Left ventricle myocardium superior (tissue), 1 donor: ENCODE measurements at regions of chr5 and their contacts with region 1.

Region 1: DNA sequence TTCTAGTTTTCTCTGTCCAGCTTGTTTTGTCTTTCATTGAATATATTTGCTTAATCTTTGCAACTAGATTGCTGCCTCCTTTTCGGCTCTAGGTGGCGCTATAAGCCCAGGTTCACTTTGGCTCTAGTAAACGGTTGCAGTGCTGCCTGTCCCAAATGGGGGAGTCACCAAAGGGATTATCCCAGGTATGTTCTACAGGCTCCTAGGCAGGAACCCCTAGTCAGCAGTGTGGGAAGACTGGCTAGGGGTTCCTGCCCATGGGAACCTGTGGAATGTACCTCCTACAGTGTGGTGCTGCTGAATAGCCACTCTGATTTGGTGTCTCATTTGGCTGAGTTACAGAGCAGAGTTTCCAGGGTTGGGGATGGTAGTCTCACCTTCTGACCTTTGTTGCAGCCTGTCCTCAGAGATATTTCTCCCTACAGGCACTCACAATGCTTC is 85.2 kb downstream of the ARSB start:
- DNase-seq: peak; percentile 30
- ATAC-seq: no peak

Region 2: GRCh38 chr5:78972654-78973428 is 72.9 kb after region 1 on chr5:
- intact Hi-C with region 1: loop called (anchors 5 kb)
- DNase-seq: peak; percentile 54
- ATAC-seq: peak; percentile 60

Region 3: DNA sequence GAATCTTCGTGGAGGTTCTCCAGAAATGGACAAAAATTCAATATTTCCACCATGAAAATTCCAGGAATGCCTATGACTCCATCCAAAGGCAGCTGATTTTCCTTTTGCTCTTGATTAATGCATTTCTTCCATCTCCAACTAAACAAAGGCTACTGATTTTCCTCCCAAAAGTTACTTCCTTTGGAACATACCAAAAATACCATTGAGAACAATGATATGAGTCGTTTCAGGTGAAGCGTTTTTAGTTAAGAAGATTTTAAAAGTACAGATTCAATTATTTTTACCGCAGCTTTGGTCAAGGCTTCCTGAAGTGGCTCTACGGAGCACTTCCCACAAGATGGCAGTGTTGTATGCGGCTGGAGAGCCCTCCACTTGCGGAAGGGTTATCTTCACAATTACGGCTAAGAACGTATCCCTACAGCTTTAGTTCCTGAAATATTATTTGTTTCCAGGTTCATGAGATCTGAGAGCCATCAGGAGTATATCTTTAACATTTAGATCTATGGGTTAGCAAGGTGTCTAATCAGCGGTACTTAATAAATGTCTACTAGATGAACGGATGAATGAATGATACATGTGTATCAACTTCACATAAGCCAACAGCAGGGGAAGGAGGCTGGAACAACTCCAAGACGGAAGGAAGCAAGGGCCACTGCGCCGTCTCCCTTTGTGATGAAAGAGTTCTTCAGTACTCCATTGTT is 121.1 kb after region 1 on chr5:
- intact Hi-C with region 1: no loop called
- DNase-seq: peak; percentile 57
- ATAC-seq: peak; percentile 78

Region 4: GRCh38 chr5:79263290-79263689 is 363.3 kb after region 1 on chr5:
- intact Hi-C with region 1: no loop called
- DNase-seq: no peak
- ATAC-seq: no peak